ENCODE measurements at regions of chr2 and their contacts with region 1.

Region 1: GRCh38 chr2:73071360-73072133 is at the start of gene SFXN5:
- DNase-seq: peak; percentile 99
- ATAC-seq: peak; percentile 96
- total RNA-seq, gene SFXN5: 8.6 TPM

Region 2: GRCh38 chr2:72989770-72990556 is 81.6 kb before region 1 on chr2:
- intact Hi-C with region 1: loop called (anchors 10 kb)
- DNase-seq: peak; percentile 72
- ATAC-seq: peak; percentile 74

Region 3: GRCh38 chr2:73359915-73360697 is 288.6 kb after region 1 on chr2:
- intact Hi-C with region 1: no loop called
- DNase-seq: no peak
- ATAC-seq: no peak

Measured in left ventricle myocardium superior (tissue), 1 donor.